Naive thymus-derived CD4-positive, alpha-beta T cell (primary cell): ENCODE measurements at regions of chr1 and their contacts with region 1.

Region 1: GRCh38 chr1:214123061-214123784 is 135.4 kb downstream of the PROX1 start:
- DNase-seq: peak in 7 of 9 donors; percentile 39 to 62 (median 53)
- ATAC-seq: peak; percentile 61
- H3K4me3 ChIP-seq: no peak overlapping the region
- H3K4me3 Mint-ChIP-seq: peak overlapping the region in 4 of 10 donors; percentile 24 to 71 (median 48)
- H3K27ac ChIP-seq: no peak overlapping the region
- H3K27ac Mint-ChIP-seq: peak overlapping the region in 3 of 9 donors; percentile 6 to 59 (median 28)
- H3K4me1 ChIP-seq: peaks cover 0 to 3% of the 10 kb centered on the region in 2 donors
- H3K4me1 Mint-ChIP-seq: peaks cover 4 to 29% (median 11%) of the 10 kb centered on the region in 7 donors
- H3K27me3 ChIP-seq: no peaks in the 10 kb centered on the region
- H3K27me3 Mint-ChIP-seq: peaks cover 0 to 19% (median 0%) of the 10 kb centered on the region in 5 donors

Region 2: DNA sequence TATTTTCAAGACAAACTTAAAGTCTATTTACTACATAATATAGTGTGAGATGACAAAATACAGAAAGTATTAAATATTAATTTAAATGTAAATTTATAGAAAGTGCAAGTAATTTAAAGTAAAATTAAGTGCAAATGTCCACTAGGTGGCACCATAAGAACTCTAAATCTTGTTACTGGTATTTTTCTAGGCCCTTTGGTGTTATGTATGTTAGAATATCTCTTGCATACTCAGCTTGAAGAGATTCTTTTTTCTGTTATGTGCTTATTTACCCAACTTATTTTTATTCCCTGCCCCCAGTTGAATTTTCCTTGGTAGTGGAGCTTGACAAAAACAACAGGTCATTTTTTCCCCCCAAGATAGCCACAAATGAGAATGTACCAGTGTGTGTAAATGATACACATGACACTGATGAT is 1000.7 kb before region 1 on chr1:
- CTCF ChIA-PET with region 1: no interaction called
- POLR2A ChIA-PET with region 1: no interaction called
- intact Hi-C with region 1: loop called in 1 of 2 experiments (anchors 1 kb)
- DNase-seq: peak in 5 of 9 donors; percentile 8 to 21 (median 16)
- ATAC-seq: no peak
- H3K4me3 ChIP-seq: no peak overlapping the region
- H3K4me3 Mint-ChIP-seq: no peak overlapping the region
- H3K27ac ChIP-seq: no peak overlapping the region
- H3K27ac Mint-ChIP-seq: no peak overlapping the region
- H3K4me1 ChIP-seq: no peaks in the 10 kb centered on the region
- H3K4me1 Mint-ChIP-seq: peaks cover 0 to 8% (median 2%) of the 10 kb centered on the region in 7 donors
- H3K27me3 ChIP-seq: no peaks in the 10 kb centered on the region
- H3K27me3 Mint-ChIP-seq: no peaks in the 10 kb centered on the region

Region 3: DNA sequence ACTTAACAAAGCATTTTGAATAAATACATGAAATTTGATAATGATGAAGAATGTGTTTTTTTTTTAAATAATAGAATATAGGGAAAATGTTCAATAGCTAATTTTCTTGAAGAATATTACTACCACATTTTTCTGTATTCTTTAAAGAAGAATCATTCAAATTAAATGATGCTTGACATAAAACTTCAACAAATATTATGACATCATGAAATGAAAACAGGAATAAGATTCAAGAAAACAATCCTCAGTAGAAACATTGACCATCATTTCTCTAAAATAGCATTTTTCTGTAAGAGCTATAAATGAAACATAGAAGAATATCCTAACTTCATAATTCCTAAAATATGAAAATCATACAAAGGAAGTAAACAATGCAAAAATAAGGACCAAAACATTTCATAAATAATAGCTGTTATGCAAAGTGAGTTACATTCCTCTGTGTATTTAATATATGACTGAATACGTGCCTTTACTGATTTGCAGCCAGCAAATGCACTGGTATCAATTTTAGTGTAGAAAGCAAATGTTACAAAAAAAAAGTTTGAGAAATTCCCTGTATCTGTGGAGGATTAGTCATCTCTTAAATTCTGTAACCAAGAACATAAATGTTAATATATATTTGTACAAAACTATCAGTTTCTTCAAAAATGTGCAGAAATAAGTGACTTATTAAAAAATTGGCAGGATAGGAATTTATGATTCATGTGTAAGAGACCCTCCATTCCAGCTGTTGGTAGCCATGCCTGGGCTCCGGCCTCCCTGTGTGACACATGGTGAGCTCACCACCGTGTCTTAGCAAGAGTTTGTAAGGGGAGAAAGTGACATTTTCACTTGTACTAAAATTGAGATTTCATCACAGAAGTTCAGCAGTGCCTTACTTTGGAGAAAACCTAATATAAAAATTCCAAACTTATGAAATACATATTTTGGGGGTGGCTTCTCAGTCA is 443.2 kb after region 1 on chr1:
- CTCF ChIA-PET with region 1: no interaction called
- POLR2A ChIA-PET with region 1: no interaction called
- intact Hi-C with region 1: no loop called
- DNase-seq: no peak
- ATAC-seq: no peak
- H3K4me3 ChIP-seq: no peak overlapping the region
- H3K4me3 Mint-ChIP-seq: no peak overlapping the region
- H3K27ac ChIP-seq: no peak overlapping the region
- H3K27ac Mint-ChIP-seq: no peak overlapping the region
- H3K4me1 ChIP-seq: no peaks in the 10 kb centered on the region
- H3K4me1 Mint-ChIP-seq: peaks cover 0 to 3% (median 0%) of the 10 kb centered on the region in 7 donors
- H3K27me3 ChIP-seq: no peaks in the 10 kb centered on the region
- H3K27me3 Mint-ChIP-seq: peaks cover 12 to 18% (median 17%) of the 10 kb centered on the region in 5 donors